ENCODE measurements at regions of chr14 and their contacts with region 1.

Region 1: GRCh38 chr14:67571272-67571850 is 28.7 kb downstream of the PIGH start:
- DNase-seq: peak; percentile 21 to 63 (median 44)
- H3K4me3 ChIP-seq: no peak overlapping the region
- H3K27ac ChIP-seq: no peak overlapping the region
- H3K4me1 ChIP-seq: no peaks in the 10 kb centered on the region
- H3K27me3 ChIP-seq: no peaks in the 10 kb centered on the region
- CTCF ChIP-seq: peak in 1 of 3 donors; percentile 43
- EP300 ChIP-seq: no peak
- POLR2A ChIP-seq: no peak

Region 2: DNA sequence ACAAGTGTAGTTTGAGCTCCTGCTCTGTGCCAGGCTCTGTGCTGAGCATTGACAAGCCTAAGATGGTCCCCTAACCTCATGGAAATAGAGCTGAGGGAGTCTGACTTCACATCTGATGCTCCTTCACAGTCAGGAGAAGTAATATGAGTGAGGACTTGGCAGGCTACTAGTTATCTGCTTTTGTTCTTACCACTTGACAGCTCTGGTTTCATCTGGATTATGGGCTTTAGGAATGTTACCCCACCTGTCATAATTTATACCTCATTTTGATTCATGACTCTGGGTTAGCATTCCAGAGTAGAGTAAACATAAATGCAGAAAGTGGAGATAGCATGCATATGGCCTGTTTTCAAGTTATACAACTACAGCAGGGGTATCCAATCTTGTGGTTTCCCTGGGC is 252.2 kb before region 1 on chr14:
- intact Hi-C with region 1: no loop called
- DNase-seq: no peak
- H3K4me3 ChIP-seq: no peak overlapping the region
- H3K27ac ChIP-seq: no peak overlapping the region
- H3K4me1 ChIP-seq: no peaks in the 10 kb centered on the region
- H3K27me3 ChIP-seq: no peaks in the 10 kb centered on the region
- CTCF ChIP-seq: no peak
- EP300 ChIP-seq: no peak
- POLR2A ChIP-seq: no peak

Region 3: GRCh38 chr14:67343601-67344230 is 227.6 kb before region 1 on chr14:
- intact Hi-C with region 1: no loop called
- DNase-seq: no peak
- H3K4me3 ChIP-seq: no peak overlapping the region
- H3K27ac ChIP-seq: no peak overlapping the region
- H3K4me1 ChIP-seq: no peaks in the 10 kb centered on the region
- H3K27me3 ChIP-seq: no peaks in the 10 kb centered on the region
- CTCF ChIP-seq: no peak
- EP300 ChIP-seq: no peak
- POLR2A ChIP-seq: no peak

Region 4: GRCh38 chr14:67426983-67427606 is 144.3 kb before region 1 on chr14:
- intact Hi-C with region 1: loop called (anchors 5 to 10 kb)
- DNase-seq: peak; percentile 53 to 74 (median 69)
- H3K4me3 ChIP-seq: no peak overlapping the region
- H3K27ac ChIP-seq: no peak overlapping the region
- H3K4me1 ChIP-seq: no peaks in the 10 kb centered on the region
- H3K27me3 ChIP-seq: no peaks in the 10 kb centered on the region
- CTCF ChIP-seq: peak; percentile 46 to 56 (median 46)
- EP300 ChIP-seq: no peak
- POLR2A ChIP-seq: no peak

Region 5: GRCh38 chr14:67435615-67436346 is 135.6 kb before region 1 on chr14:
- intact Hi-C with region 1: loop called in 1 of 4 experiments (anchors 10 kb)
- DNase-seq: no peak
- H3K4me3 ChIP-seq: no peak overlapping the region
- H3K27ac ChIP-seq: no peak overlapping the region
- H3K4me1 ChIP-seq: no peaks in the 10 kb centered on the region
- H3K27me3 ChIP-seq: no peaks in the 10 kb centered on the region
- CTCF ChIP-seq: no peak
- EP300 ChIP-seq: no peak
- POLR2A ChIP-seq: no peak

Region 6: GRCh38 chr14:67551940-67552339 is 19.4 kb before region 1 on chr14:
- intact Hi-C with region 1: no loop called
- DNase-seq: no peak
- H3K4me3 ChIP-seq: no peak overlapping the region
- H3K27ac ChIP-seq: no peak overlapping the region
- H3K4me1 ChIP-seq: no peaks in the 10 kb centered on the region
- H3K27me3 ChIP-seq: no peaks in the 10 kb centered on the region
- CTCF ChIP-seq: no peak
- EP300 ChIP-seq: no peak
- POLR2A ChIP-seq: no peak